Right lobe of liver (tissue), 6 donors: ENCODE measurements at regions of chr4 and their contacts with region 1.

Region 1: DNA sequence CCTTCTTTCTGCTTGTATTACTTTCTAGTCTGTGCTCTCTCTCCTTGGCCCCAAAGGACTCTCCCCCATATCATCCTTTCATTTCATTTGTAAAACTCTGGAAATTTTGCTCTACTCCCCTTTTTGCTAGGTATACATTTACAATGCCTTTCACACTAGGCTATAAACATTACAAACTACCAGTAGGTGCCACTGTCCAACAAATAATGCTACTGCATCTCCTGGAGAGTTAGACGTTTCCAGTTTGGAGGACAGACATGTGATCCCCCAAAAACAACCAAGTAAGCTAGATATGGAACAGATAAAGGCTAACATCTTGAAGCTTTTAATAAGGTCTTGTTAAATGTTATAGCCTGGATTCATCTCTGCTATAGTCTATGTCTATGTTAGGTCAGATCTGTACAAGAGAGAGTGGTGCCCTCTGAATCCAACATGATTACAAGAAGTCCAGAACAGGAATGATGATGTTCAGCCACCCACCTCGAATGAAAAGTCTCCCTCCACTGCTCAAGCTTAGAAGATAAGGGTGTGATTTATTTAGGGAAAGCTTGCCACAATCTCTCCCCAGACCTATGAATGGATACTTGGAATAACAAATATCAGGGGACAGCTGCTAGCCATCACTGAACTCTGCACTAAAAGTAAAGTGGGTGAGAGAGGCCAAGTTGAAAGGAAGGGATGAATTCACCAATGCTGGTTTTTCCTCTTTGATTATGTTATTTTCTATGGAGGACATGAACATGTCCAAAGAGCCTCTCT is 14.3 kb downstream of the CBR4 start:
- DNase-seq: no peak
- ATAC-seq: peak; percentile 46 to 55 (median 47)
- H3K4me3 ChIP-seq: no peak overlapping the region
- H3K27ac ChIP-seq: no peak overlapping the region
- H3K4me1 ChIP-seq: peaks cover 0 to 16% (median 8%) of the 10 kb centered on the region in 4 donors
- H3K27me3 ChIP-seq: no peaks in the 10 kb centered on the region
- CTCF ChIP-seq: peak; percentile 14 to 31 (median 24)
- POLR2A ChIP-seq: no peak

Region 2: GRCh38 chr4:169147191-169147590 is 151.5 kb after region 1 on chr4:
- intact Hi-C with region 1: no loop called
- DNase-seq: no peak
- ATAC-seq: peak in 1 of 4 donors; percentile 42
- H3K4me3 ChIP-seq: no peak overlapping the region
- H3K27ac ChIP-seq: no peak overlapping the region
- H3K4me1 ChIP-seq: no peaks in the 10 kb centered on the region
- H3K27me3 ChIP-seq: no peaks in the 10 kb centered on the region
- CTCF ChIP-seq: no peak
- POLR2A ChIP-seq: no peak

Region 3: GRCh38 chr4:169485791-169486742 is 490.4 kb after region 1 on chr4:
- intact Hi-C with region 1: loop called in 1 of 2 experiments (anchors 10 kb)
- DNase-seq: no peak
- ATAC-seq: peak; percentile 86 to 93 (median 88)
- H3K4me3 ChIP-seq: peak overlapping the region in 2 of 3 donors; percentile 0 to 1
- H3K27ac ChIP-seq: no peak overlapping the region
- H3K4me1 ChIP-seq: peaks cover 0 to 4% (median 0%) of the 10 kb centered on the region in 4 donors
- H3K27me3 ChIP-seq: no peaks in the 10 kb centered on the region
- CTCF ChIP-seq: peak; percentile 49 to 66 (median 59)
- POLR2A ChIP-seq: no peak